Breast epithelium (tissue), 4 donors: ENCODE measurements at regions of chr5 and their contacts with region 1.

Region 1: GRCh38 chr5:26681806-26682205 is 356.6 kb downstream of the CDH9 start:
- DNase-seq: no peak
- H3K4me3 ChIP-seq: no peak overlapping the region
- H3K27ac ChIP-seq: no peak overlapping the region
- H3K4me1 ChIP-seq: no peaks in the 10 kb centered on the region
- H3K27me3 ChIP-seq: no peaks in the 10 kb centered on the region
- CTCF ChIP-seq: no peak
- POLR2A ChIP-seq: no peak

Region 2: GRCh38 chr5:26647781-26648180 is 34.0 kb before region 1 on chr5:
- intact Hi-C with region 1: loop called (anchors 2 kb)
- DNase-seq: no peak
- H3K4me3 ChIP-seq: no peak overlapping the region
- H3K27ac ChIP-seq: no peak overlapping the region
- H3K4me1 ChIP-seq: no peaks in the 10 kb centered on the region
- H3K27me3 ChIP-seq: no peaks in the 10 kb centered on the region
- CTCF ChIP-seq: no peak
- POLR2A ChIP-seq: no peak

Region 3: DNA sequence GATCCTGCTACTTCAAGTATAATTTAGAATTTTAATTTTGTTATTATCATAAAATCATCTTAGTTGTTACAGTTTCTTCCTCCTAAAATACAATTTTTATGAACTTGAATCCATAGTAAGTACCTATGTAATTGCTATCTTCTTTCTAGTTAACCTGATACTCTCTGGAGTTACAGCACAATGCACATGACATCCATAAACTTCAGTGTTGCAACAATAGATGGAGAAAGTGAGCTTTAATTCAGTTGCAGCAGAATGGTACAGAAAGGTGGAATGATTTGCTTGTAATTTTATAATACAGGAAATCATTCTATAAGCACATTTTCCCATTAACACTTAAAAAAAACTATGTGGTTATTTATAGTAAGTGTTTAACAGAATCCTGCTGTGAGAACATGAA is 15.4 kb before region 1 on chr5:
- intact Hi-C with region 1: no loop called
- DNase-seq: no peak
- H3K4me3 ChIP-seq: no peak overlapping the region
- H3K27ac ChIP-seq: no peak overlapping the region
- H3K4me1 ChIP-seq: no peaks in the 10 kb centered on the region
- H3K27me3 ChIP-seq: no peaks in the 10 kb centered on the region
- CTCF ChIP-seq: no peak
- POLR2A ChIP-seq: no peak